IMR-90 (cell line): ENCODE measurements at regions of chr17 and their contacts with region 1.

Region 1: GRCh38 chr17:42527273-42527703 is 8.8 kb upstream of the NAGLU start:
- DNase-seq: peak; percentile 83
- ATAC-seq: peak; percentile 79
- H3K4me3 ChIP-seq: no peak overlapping the region
- H3K27ac ChIP-seq: peak overlapping the region; percentile 51
- H3K4me1 ChIP-seq: peaks cover 30% of the 10 kb centered on the region
- H3K27me3 ChIP-seq: no peaks in the 10 kb centered on the region
- CTCF ChIP-seq: peak; percentile 89
- POLR2A ChIP-seq: 0 out of 2 replicates have a peak, but pooled peaks have one; percentile 43
- RAD21 ChIP-seq: peak; percentile 98

Region 2: GRCh38 chr17:41966463-41967140 is 560.7 kb before region 1 on chr17 and contains the start of gene CNP:
- CTCF ChIA-PET with region 1: no interaction called
- POLR2A ChIA-PET with region 1: no interaction called
- dilution Hi-C with region 1: no loop called
- in situ Hi-C with region 1: no loop called
- intact Hi-C with region 1: loop called (anchors 5 kb)
- DNase-seq: peak; percentile 87
- ATAC-seq: peak; percentile 91
- H3K4me3 ChIP-seq: peak within 1 kb of the TSS; percentile 94
- H3K27ac ChIP-seq: peak within 1 kb of the TSS; percentile 81
- H3K4me1 ChIP-seq: peaks cover 11% of the 10 kb centered on the region
- H3K27me3 ChIP-seq: no peaks in the 10 kb centered on the region
- CTCF ChIP-seq: no peak
- POLR2A ChIP-seq: peak; percentile 89
- RAD21 ChIP-seq: no peak
- total RNA-seq, gene CNP: 45.5 and 50.3 TPM in 2 replicates

Region 3: GRCh38 chr17:42107597-42108576 is 419.4 kb before region 1 on chr17:
- CTCF ChIA-PET with region 1: no interaction called
- POLR2A ChIA-PET with region 1: no interaction called
- dilution Hi-C with region 1: no loop called
- in situ Hi-C with region 1: no loop called
- intact Hi-C with region 1: no loop called
- DNase-seq: peak; percentile 32
- ATAC-seq: peak; percentile 94
- H3K4me3 ChIP-seq: peak overlapping the region; percentile 48
- H3K27ac ChIP-seq: no peak overlapping the region
- H3K4me1 ChIP-seq: peaks cover 6% of the 10 kb centered on the region; the same call in 1 of the 2 replicates
- H3K27me3 ChIP-seq: peaks cover 7% of the 10 kb centered on the region
- CTCF ChIP-seq: no peak
- POLR2A ChIP-seq: no peak
- RAD21 ChIP-seq: no peak

Region 4: DNA sequence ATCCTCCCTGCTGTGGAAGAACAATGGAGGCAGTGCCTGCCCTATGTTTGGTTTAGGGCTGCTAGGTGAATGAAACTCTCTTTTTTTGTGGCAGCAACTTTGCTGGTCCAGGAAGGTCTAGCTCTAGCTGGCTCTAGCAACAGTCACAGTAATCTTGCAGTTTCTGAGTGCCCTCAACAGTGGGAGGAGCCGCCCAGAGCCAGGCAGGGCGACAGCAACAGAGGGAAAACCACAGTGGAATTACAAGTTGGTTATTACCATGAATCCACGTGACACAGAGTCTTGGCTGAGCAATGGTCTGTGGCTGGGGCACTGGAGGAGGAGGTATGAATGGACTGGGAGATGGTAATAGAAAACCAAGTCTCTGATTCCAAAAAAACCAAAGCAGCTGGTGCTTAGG is 394.3 kb before region 1 on chr17:
- CTCF ChIA-PET with region 1: interaction called, 3 read pairs
- POLR2A ChIA-PET with region 1: no interaction called
- dilution Hi-C with region 1: no loop called
- in situ Hi-C with region 1: no loop called
- intact Hi-C with region 1: loop called (anchors 10 kb)
- DNase-seq: peak; percentile 81
- ATAC-seq: peak; percentile 88
- H3K4me3 ChIP-seq: no peak overlapping the region
- H3K27ac ChIP-seq: 0 out of 2 replicates have a peak overlapping the region, but pooled peaks have one; percentile 41
- H3K4me1 ChIP-seq: peaks cover 27% of the 10 kb centered on the region
- H3K27me3 ChIP-seq: no peaks in the 10 kb centered on the region
- CTCF ChIP-seq: no peak
- POLR2A ChIP-seq: no peak
- RAD21 ChIP-seq: no peak

Region 5: GRCh38 chr17:42221937-42222745 is 305.1 kb before region 1 on chr17:
- CTCF ChIA-PET with region 1: interaction called, 3 read pairs
- POLR2A ChIA-PET with region 1: no interaction called
- dilution Hi-C with region 1: no loop called
- in situ Hi-C with region 1: loop called (anchors 10 kb)
- intact Hi-C with region 1: loop called (anchors 5 kb)
- DNase-seq: peak; percentile 58
- ATAC-seq: peak; percentile 97
- H3K4me3 ChIP-seq: no peak overlapping the region
- H3K27ac ChIP-seq: no peak overlapping the region
- H3K4me1 ChIP-seq: no peaks in the 10 kb centered on the region
- H3K27me3 ChIP-seq: no peaks in the 10 kb centered on the region
- CTCF ChIP-seq: peak; percentile 77
- POLR2A ChIP-seq: no peak
- RAD21 ChIP-seq: peak; percentile 81

Region 6: GRCh38 chr17:42428141-42428944 is 98.9 kb before region 1 on chr17:
- CTCF ChIA-PET with region 1: interaction called, 3 read pairs
- POLR2A ChIA-PET with region 1: no interaction called
- dilution Hi-C with region 1: no loop called
- in situ Hi-C with region 1: loop called (anchors 5 kb)
- intact Hi-C with region 1: loop called (anchors 1 kb)
- DNase-seq: peak; percentile 99
- ATAC-seq: peak; percentile 92
- H3K4me3 ChIP-seq: no peak overlapping the region
- H3K27ac ChIP-seq: peak overlapping the region; percentile 64
- H3K4me1 ChIP-seq: peaks cover 13% of the 10 kb centered on the region
- H3K27me3 ChIP-seq: no peaks in the 10 kb centered on the region
- CTCF ChIP-seq: peak; percentile 82
- POLR2A ChIP-seq: peak; percentile 45; the same call in 1 of the 2 replicates
- RAD21 ChIP-seq: peak; percentile 82